Sigmoid colon (tissue), 7 donors: ENCODE measurements at regions of chr17 and their contacts with region 1.

Region 1: GRCh38 chr17:35119368-35120165 is at the start of gene RAD51D:
- DNase-seq: peak; percentile 83
- H3K4me3 ChIP-seq: peak within 1 kb of the TSS; percentile 68 to 88 (median 79)
- H3K27ac ChIP-seq: peak within 1 kb of the TSS; percentile 75 to 80 (median 80)
- H3K4me1 ChIP-seq: peaks cover 0 to 28% (median 23%) of the 10 kb centered on the region in 4 donors
- H3K27me3 ChIP-seq: no peaks in the 10 kb centered on the region
- CTCF ChIP-seq: peak; percentile 69 to 97 (median 79)
- EP300 ChIP-seq: no peak
- POLR2A ChIP-seq: no peak
- total RNA-seq, gene RAD51D: 4.3 to 12.6 (median 7.9) TPM

Region 2: DNA sequence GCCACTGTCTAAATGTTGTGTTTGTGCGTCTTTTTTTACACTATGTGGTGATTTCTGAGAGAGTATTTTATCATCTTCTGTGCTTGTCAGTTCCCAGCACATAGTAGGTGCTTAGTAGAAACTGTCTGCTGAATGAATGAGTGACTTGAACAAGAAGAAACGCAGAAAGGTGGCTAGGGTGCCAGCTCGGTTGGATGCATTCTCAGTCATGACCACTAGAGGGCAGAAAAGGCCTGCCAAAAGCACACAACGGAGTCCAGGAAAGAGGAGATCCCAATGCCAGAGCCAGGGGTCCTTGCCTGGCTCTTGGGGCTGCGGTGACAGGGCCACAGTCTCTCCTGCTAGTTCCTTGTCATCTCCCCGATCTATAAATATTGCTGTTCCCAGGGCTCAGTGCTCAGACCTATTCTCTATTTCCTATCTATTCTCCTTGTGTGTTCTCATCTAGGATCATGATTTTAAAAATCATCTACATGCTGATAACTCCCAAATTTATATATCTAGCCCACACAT is 699.3 kb before region 1 on chr17:
- intact Hi-C with region 1: loop called (anchors 1 kb)
- DNase-seq: peak; percentile 73
- H3K4me3 ChIP-seq: no peak overlapping the region
- H3K27ac ChIP-seq: no peak overlapping the region
- H3K4me1 ChIP-seq: peaks cover 0 to 15% (median 5%) of the 10 kb centered on the region in 4 donors
- H3K27me3 ChIP-seq: peaks cover 10 to 67% (median 38%) of the 10 kb centered on the region in 3 donors
- CTCF ChIP-seq: peak; percentile 38 to 95 (median 84)
- EP300 ChIP-seq: no peak
- POLR2A ChIP-seq: no peak

Region 3: GRCh38 chr17:34542700-34543336 is 576.7 kb before region 1 on chr17:
- intact Hi-C with region 1: loop called (anchors 1 kb)
- DNase-seq: no peak
- H3K4me3 ChIP-seq: no peak overlapping the region
- H3K27ac ChIP-seq: no peak overlapping the region
- H3K4me1 ChIP-seq: no peaks in the 10 kb centered on the region
- H3K27me3 ChIP-seq: peaks cover 0 to 14% (median 9%) of the 10 kb centered on the region in 3 donors
- CTCF ChIP-seq: peak; percentile 41 to 83 (median 71)
- EP300 ChIP-seq: no peak
- POLR2A ChIP-seq: no peak

Region 4: GRCh38 chr17:34980681-34981537 is 138.7 kb before region 1 on chr17:
- intact Hi-C with region 1: loop called (anchors 1 kb)
- DNase-seq: peak; percentile 91
- H3K4me3 ChIP-seq: peak overlapping the region; percentile 74 to 80 (median 77)
- H3K27ac ChIP-seq: peak overlapping the region; percentile 94 to 98 (median 96)
- H3K4me1 ChIP-seq: peaks cover 0 to 36% (median 28%) of the 10 kb centered on the region in 4 donors
- H3K27me3 ChIP-seq: no peaks in the 10 kb centered on the region
- CTCF ChIP-seq: peak in 3 of 4 experiments; percentile 5 to 25 (median 23)
- EP300 ChIP-seq: no peak
- POLR2A ChIP-seq: peak in 1 of 2 donors; percentile 48

Region 5: DNA sequence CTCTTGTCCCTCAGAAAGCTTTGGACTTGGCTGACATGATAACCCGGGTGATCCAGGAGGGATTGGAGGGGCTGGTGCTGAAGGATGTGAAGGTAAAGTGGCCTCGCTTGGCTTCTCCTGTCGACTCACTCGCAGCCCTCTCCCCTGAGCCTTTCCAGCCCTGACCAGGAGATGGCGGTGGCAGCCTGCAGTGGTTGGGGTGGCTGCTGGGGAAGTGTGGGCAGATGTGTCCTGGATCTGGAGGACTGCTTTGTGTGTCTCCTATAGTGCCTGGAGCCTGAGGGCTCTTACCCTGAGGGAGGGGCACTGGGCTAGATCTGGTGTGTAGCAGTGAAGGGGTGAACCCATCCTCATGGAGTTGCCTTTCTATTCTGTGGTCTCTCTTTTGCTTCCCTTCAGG is 121.4 kb before region 1 on chr17:
- intact Hi-C with region 1: loop called (anchors 1 kb)
- DNase-seq: peak; percentile 89
- H3K4me3 ChIP-seq: peak overlapping the region in 2 of 4 donors; percentile 4 to 13
- H3K27ac ChIP-seq: peak overlapping the region; percentile 86 to 92 (median 89)
- H3K4me1 ChIP-seq: peaks cover 0 to 69% (median 57%) of the 10 kb centered on the region in 4 donors
- H3K27me3 ChIP-seq: no peaks in the 10 kb centered on the region
- CTCF ChIP-seq: peak; percentile 74 to 87 (median 79)
- EP300 ChIP-seq: no peak
- POLR2A ChIP-seq: no peak

Region 6: GRCh38 chr17:35161281-35161761 is 41.8 kb after region 1 on chr17:
- intact Hi-C with region 1: no loop called
- DNase-seq: no peak
- H3K4me3 ChIP-seq: no peak overlapping the region
- H3K27ac ChIP-seq: no peak overlapping the region
- H3K4me1 ChIP-seq: no peaks in the 10 kb centered on the region
- H3K27me3 ChIP-seq: no peaks in the 10 kb centered on the region
- CTCF ChIP-seq: no peak
- EP300 ChIP-seq: no peak
- POLR2A ChIP-seq: no peak